ENCODE measurements at regions of chr22 and their contacts with region 1.

Region 1: GRCh38 chr22:35231585-35232084 is 25.7 kb upstream of the HMGXB4 start:
- DNase-seq: peak; percentile 78
- H3K4me3 Mint-ChIP-seq: no peak overlapping the region
- H3K27ac Mint-ChIP-seq: no peak overlapping the region
- H3K4me1 Mint-ChIP-seq: peaks cover 13% of the 10 kb centered on the region
- H3K27me3 Mint-ChIP-seq: peaks cover 16% of the 10 kb centered on the region

Region 2: GRCh38 chr22:35037089-35037488 is 194.5 kb before region 1 on chr22:
- CTCF ChIA-PET with region 1: no interaction called
- POLR2A ChIA-PET with region 1: interaction called, 11 read pairs
- DNase-seq: no peak
- H3K4me3 Mint-ChIP-seq: no peak overlapping the region
- H3K27ac Mint-ChIP-seq: no peak overlapping the region
- H3K4me1 Mint-ChIP-seq: no peaks in the 10 kb centered on the region
- H3K27me3 Mint-ChIP-seq: no peaks in the 10 kb centered on the region